Activated CD4-positive, alpha-beta T cell treated with anti-CD3 and anti-CD28 coated beads for 36 hours (primary cell): ENCODE measurements at regions of chrX and their contacts with region 1.

Region 1: DNA sequence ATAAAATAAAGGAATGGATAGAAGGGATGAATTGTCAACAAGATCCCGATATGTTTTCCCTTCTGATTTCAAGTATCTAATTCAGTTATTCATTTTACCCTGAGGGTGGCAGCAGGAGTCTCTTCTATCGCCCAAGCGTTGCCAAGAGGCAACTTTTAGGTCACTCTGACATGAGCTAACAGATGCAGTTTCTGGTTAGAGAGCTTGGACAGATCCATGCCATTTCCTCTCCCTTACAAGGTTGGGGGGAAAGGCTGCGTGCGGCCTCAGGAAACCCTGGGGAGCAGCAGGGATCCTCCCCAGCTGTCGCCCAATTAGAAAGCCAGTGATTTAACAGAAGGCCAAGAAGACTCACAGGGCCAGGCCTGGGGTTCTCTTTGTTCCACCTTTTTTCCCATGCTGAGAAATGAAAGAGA is 35.3 kb upstream of the WAS start:
- DNase-seq: peak; percentile 47
- ATAC-seq: peak; percentile 64
- H3K4me3 Mint-ChIP-seq: no peak overlapping the region
- H3K27ac Mint-ChIP-seq: no peak overlapping the region
- H3K4me1 Mint-ChIP-seq: peaks cover 6% of the 10 kb centered on the region
- H3K27me3 Mint-ChIP-seq: no peaks in the 10 kb centered on the region

Region 2: GRCh38 chrX:48945516-48946348 is 297.4 kb after region 1 on chrX:
- CTCF ChIA-PET with region 1: interaction called, 6 read pairs
- POLR2A ChIA-PET with region 1: no interaction called
- intact Hi-C with region 1: loop called in 1 of 2 experiments (anchors 2 kb)
- DNase-seq: peak; percentile 71
- ATAC-seq: peak; percentile 42
- H3K4me3 Mint-ChIP-seq: peak overlapping the region; percentile 17
- H3K27ac Mint-ChIP-seq: peak overlapping the region; percentile 84
- H3K4me1 Mint-ChIP-seq: peaks cover 50% of the 10 kb centered on the region
- H3K27me3 Mint-ChIP-seq: no peaks in the 10 kb centered on the region